MCF 10A (cell line): ENCODE measurements at regions of chr17 and their contacts with region 1.

Region 1: GRCh38 chr17:10844621-10845387 is 6.9 kb upstream of the PIRT start:
- DNase-seq: peak; percentile 45
- H3K4me3 Mint-ChIP-seq: peak overlapping the region; percentile 52
- H3K27ac Mint-ChIP-seq: no peak overlapping the region
- H3K4me1 Mint-ChIP-seq: peaks cover 11% of the 10 kb centered on the region
- H3K27me3 Mint-ChIP-seq: peaks cover 11% of the 10 kb centered on the region
- CTCF ChIP-seq: peak; percentile 90

Region 2: DNA sequence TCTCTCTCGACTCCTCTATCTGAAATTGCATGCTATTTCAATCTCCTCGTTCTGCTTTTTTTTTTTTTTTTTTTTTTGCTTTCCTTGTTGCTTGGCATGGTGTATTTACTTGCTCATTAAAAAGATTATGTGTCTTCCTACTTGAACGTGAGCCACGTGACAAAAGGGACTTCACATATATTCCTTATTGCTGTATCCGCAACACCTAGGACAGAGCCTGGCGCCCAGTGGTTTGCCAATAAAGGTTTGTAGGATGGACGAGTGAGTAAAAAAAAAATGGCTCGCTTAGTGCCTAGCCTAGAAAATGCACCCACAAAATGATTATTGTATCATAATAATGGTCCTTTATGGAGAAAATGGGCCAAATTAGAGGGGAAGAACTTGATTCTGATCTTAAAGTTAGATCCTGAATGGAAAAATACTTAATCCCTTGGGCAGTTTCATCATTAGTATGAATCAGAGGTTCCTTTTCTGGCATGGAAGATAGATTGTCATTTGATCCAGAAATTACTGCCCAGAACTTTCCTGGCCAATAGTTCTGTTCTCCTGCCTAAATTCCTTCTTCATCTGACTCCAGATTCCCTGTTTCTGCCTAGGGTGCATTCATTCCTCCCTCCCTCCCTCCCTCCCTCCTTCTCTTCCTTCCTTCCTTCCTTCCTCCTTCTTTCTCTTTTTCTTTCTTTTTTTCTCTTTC is 101.3 kb before region 1 on chr17:
- CTCF ChIA-PET with region 1: interaction called, 13 read pairs
- POLR2A ChIA-PET with region 1: no interaction called
- intact Hi-C with region 1: no loop called
- DNase-seq: peak; percentile 40
- H3K4me3 Mint-ChIP-seq: no peak overlapping the region
- H3K27ac Mint-ChIP-seq: no peak overlapping the region
- H3K4me1 Mint-ChIP-seq: peaks cover 5% of the 10 kb centered on the region
- H3K27me3 Mint-ChIP-seq: peaks cover 77% of the 10 kb centered on the region
- CTCF ChIP-seq: no peak

Region 3: DNA sequence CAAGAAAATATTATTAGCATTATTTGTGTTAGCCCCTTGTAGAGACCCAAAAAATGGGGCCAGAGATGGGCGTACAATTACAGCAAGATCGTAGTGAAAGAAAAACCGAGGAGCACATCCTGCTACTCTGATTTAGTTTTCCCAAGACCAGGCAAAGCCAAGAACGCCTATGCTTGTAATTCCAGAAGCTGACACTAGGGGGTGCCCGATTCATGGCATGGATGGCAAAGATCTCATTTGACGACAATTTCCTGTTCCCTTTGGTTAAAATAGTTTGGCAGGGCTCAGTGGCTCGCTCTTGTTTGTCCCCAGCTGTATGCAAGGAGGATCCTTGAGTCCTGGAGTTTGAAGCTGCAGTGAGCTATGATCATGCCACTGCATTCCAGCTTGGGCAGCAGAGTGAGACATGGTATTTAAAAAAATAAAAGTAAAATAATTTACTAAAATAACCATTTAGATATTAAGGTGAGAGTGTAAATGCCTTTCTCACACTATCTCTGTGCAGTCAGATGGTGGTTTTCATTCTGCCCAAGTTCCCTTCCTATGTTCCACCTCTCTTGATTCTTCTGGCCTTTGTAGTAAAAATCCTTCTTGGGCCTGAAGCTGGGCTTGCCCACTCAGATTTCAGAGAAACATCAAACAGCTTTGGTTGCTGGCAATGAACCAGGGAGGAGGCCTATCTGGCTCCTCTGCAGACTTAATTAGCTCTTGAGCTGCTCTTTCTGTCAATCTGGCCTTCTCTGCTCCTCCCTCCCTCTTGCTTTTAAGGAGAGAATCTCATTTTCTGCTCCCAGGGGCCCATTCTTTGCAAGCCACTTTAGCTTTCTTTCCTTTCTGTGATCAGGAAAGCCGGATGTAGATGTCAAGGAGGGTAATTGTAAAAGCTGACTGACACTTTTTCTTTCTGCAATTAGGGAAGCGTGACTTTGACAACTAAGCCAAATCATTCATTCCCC is 72.1 kb before region 1 on chr17:
- CTCF ChIA-PET with region 1: interaction called, 9 read pairs
- POLR2A ChIA-PET with region 1: interaction called, 3 read pairs
- intact Hi-C with region 1: loop called (anchors 2 kb)
- DNase-seq: peak; percentile 48
- H3K4me3 Mint-ChIP-seq: no peak overlapping the region
- H3K27ac Mint-ChIP-seq: no peak overlapping the region
- H3K4me1 Mint-ChIP-seq: no peaks in the 10 kb centered on the region
- H3K27me3 Mint-ChIP-seq: no peaks in the 10 kb centered on the region
- CTCF ChIP-seq: peak; percentile 85

Region 4: GRCh38 chr17:10888858-10889257 is 44.1 kb after region 1 on chr17:
- CTCF ChIA-PET with region 1: no interaction called
- POLR2A ChIA-PET with region 1: no interaction called
- intact Hi-C with region 1: no loop called
- DNase-seq: no peak
- H3K4me3 Mint-ChIP-seq: no peak overlapping the region
- H3K27ac Mint-ChIP-seq: no peak overlapping the region
- H3K4me1 Mint-ChIP-seq: no peaks in the 10 kb centered on the region
- H3K27me3 Mint-ChIP-seq: peaks cover 11% of the 10 kb centered on the region
- CTCF ChIP-seq: no peak